Pancreas (tissue), 10 donors: ENCODE measurements at regions of chr11 and their contacts with region 1.

Region 1: GRCh38 chr11:30346068-30346688 is 23.3 kb downstream of the ARL14EP start:
- DNase-seq: no peak
- ATAC-seq: peak in 3 of 4 donors; percentile 71 to 81 (median 76)
- H3K4me3 ChIP-seq: no peak overlapping the region
- H3K27ac ChIP-seq: no peak overlapping the region
- H3K4me1 ChIP-seq: no peaks in the 10 kb centered on the region
- H3K27me3 ChIP-seq: no peaks in the 10 kb centered on the region
- CTCF ChIP-seq: peak; percentile 29 to 54 (median 42)

Region 2: DNA sequence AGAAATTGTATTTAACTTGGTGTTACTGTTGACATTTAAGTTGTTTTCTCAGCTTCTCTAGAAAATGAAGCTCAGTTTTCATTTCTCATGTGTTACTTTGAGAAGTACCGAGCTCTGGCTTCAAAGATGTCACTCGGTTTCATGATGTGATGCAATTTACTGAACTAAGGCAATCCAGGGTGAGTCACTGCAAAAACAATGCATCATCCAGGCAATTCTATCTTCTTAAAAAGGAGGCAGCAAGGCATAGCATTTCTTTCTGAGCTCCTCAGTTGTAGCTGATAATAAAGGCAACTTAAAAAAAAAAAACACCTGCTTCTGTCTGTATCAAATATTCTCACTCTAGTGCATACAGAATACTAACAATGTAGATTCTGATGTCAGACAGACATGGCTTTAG is 238.3 kb before region 1 on chr11:
- intact Hi-C with region 1: no loop called
- DNase-seq: no peak
- ATAC-seq: peak in 1 of 4 donors; percentile 49
- H3K4me3 ChIP-seq: no peak overlapping the region
- H3K27ac ChIP-seq: no peak overlapping the region
- H3K4me1 ChIP-seq: no peaks in the 10 kb centered on the region
- H3K27me3 ChIP-seq: no peaks in the 10 kb centered on the region
- CTCF ChIP-seq: no peak

Region 3: GRCh38 chr11:30855383-30856006 is 509.3 kb after region 1 on chr11:
- intact Hi-C with region 1: loop called in 2 of 3 experiments (anchors 5 to 10 kb)
- DNase-seq: no peak
- ATAC-seq: peak in 3 of 4 donors; percentile 47 to 67 (median 60)
- H3K4me3 ChIP-seq: no peak overlapping the region
- H3K27ac ChIP-seq: no peak overlapping the region
- H3K4me1 ChIP-seq: no peaks in the 10 kb centered on the region
- H3K27me3 ChIP-seq: no peaks in the 10 kb centered on the region
- CTCF ChIP-seq: peak in 3 of 4 donors; percentile 13 to 35 (median 13)

Region 4: DNA sequence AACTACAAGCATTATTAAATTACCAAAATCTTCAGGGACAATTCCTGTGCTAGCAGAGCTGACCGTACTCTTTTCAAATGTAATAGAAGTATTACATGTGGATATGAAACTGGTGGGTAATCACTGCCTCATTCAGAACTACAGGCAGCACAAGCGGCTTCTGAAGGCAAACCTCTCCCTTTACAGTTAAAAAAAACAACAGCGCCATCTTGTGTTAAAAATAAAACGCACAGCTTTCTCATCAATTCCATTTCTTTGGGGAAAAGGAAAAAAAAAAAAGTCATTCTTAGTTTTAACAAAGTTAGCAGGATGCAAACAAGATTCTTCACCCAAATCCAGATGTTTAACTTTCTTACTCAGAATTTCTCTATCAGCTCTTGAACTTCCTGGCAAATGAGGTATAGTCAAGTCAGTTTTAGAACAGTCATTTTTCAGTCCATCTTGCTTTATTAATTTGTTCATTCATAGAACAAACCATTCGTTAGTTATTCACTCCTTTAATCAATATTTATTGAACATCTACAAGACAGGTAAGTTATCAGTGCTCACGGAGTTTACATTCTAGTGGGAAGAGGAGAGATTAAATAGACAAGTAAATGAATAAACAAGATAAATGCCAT is 571.8 kb after region 1 on chr11:
- intact Hi-C with region 1: loop called in 1 of 3 experiments (anchors 5 kb)
- DNase-seq: no peak
- ATAC-seq: peak in 3 of 4 donors; percentile 74 to 77 (median 74)
- H3K4me3 ChIP-seq: no peak overlapping the region
- H3K27ac ChIP-seq: no peak overlapping the region
- H3K4me1 ChIP-seq: no peaks in the 10 kb centered on the region
- H3K27me3 ChIP-seq: peaks cover 0 to 5% (median 0%) of the 10 kb centered on the region in 4 donors
- CTCF ChIP-seq: peak in 3 of 4 donors; percentile 55 to 68 (median 60)